GM23248 (cell line): ENCODE measurements at regions of chr18 and their contacts with region 1.

Region 1: GRCh38 chr18:25351777-25352628 is at the start of gene ZNF521:
- DNase-seq: peak; percentile 91
- H3K4me3 ChIP-seq: peak within 1 kb of the TSS; percentile 97
- H3K27ac ChIP-seq: peak within 1 kb of the TSS; percentile 86
- H3K4me1 ChIP-seq: peaks cover 4% of the 10 kb centered on the region
- H3K27me3 ChIP-seq: no peaks in the 10 kb centered on the region; the same call in 1 of the 2 replicates
- total RNA-seq, gene ZNF521: 12.1 and 17.9 TPM in 2 replicates

Region 2: GRCh38 chr18:24878289-24878688 is 473.7 kb before region 1 on chr18:
- in situ Hi-C with region 1: loop called (anchors 10 kb)
- DNase-seq: peak; percentile 69
- H3K4me3 ChIP-seq: no peak overlapping the region
- H3K27ac ChIP-seq: no peak overlapping the region
- H3K4me1 ChIP-seq: peaks cover 17% of the 10 kb centered on the region
- H3K27me3 ChIP-seq: 0 out of 2 replicates have a peak, but pooled peaks cover 11% of the 10 kb centered on the region

Region 3: GRCh38 chr18:24954341-24954740 is 397.7 kb before region 1 on chr18:
- in situ Hi-C with region 1: no loop called
- DNase-seq: no peak
- H3K4me3 ChIP-seq: no peak overlapping the region
- H3K27ac ChIP-seq: no peak overlapping the region
- H3K4me1 ChIP-seq: no peaks in the 10 kb centered on the region
- H3K27me3 ChIP-seq: peaks cover 6% of the 10 kb centered on the region

Region 4: GRCh38 chr18:25896178-25896780 is 544.3 kb after region 1 on chr18:
- in situ Hi-C with region 1: loop called (anchors 25 kb)
- DNase-seq: peak; percentile 67
- H3K4me3 ChIP-seq: no peak overlapping the region
- H3K27ac ChIP-seq: no peak overlapping the region
- H3K4me1 ChIP-seq: no peaks in the 10 kb centered on the region
- H3K27me3 ChIP-seq: no peaks in the 10 kb centered on the region; the same call in none of the 2 replicates